ENCODE measurements at regions of chr6 and their contacts with region 1.

Region 1: GRCh38 chr6:166786704-166787293 is 159.7 kb upstream of the RPS6KA2 start:
- DNase-seq: no peak
- ATAC-seq: peak in 2 of 4 donors; percentile 63 to 66
- H3K4me3 ChIP-seq: no peak overlapping the region
- H3K27ac ChIP-seq: no peak overlapping the region
- H3K4me1 ChIP-seq: no peaks in the 10 kb centered on the region
- H3K27me3 ChIP-seq: no peaks in the 10 kb centered on the region
- CTCF ChIP-seq: peak; percentile 76

Region 2: DNA sequence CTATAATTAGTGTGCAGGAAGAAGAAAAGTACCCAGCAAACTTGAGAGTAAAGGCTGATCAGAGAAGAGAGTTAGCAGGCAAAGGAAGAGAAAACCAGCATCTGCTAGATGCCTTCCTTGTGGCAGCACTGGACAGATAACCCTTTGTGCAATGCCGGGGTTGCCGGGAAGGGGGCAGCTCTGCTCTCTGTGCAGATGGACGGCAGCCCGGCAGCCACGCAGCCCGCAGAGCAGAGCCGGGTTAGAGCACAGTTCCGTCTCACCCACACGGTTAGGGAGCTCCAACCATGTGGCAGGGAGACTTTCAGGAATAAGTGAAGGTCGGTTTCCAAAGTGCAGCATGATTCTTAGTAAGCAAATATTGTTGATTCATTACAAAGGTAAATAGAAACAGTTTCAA is 79.8 kb before region 1 on chr6:
- intact Hi-C with region 1: no loop called
- DNase-seq: peak; percentile 54 to 76
- ATAC-seq: peak; percentile 78 to 93 (median 88)
- H3K4me3 ChIP-seq: peak overlapping the region; percentile 30
- H3K27ac ChIP-seq: no peak overlapping the region
- H3K4me1 ChIP-seq: no peaks in the 10 kb centered on the region
- H3K27me3 ChIP-seq: no peaks in the 10 kb centered on the region
- CTCF ChIP-seq: peak; percentile 57

Region 3: DNA sequence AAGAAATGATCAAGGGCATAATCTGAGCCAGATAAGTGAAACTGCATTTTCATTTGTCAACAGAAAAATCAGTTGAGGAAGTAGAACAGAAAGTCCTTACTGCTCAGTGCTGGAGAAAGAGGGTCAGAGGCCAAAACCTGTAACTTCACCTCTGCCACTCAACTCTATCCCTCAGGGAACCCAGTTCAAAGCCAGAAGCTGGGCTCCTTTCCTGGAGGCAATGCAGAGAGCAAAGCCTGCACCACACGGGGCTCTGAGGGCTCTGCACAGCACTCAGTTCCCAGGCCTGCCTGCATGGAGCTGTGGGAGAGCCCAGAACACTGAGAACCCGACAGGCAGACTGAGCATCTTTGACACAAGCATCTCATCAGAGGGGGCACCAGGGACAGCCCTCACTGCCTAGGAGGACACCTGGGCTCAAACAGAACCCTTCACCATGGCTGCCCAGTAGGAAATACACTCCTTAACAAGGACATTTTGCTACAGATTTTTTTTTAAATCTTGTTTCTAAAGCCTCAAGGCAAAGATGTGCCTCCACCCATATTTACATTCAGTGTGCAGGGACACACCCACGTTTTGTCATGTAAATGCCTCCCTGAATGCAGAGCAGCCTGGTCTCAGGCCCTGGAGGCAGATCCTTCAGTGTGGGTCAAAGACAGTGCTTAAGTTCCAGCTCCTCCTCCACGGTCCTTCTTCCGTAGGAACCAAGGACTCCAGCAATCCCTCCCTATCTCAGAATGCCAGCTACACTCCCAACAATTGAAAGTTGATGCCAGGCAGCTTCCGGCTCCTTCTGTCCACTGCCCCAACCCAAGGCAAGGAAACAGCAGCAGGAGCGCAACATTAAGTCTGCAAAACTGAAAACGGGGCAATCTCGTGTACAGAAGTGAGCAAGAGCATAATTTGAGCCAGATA is 163.0 kb after region 1 on chr6:
- intact Hi-C with region 1: loop called (anchors 2 to 5 kb)
- DNase-seq: no peak
- ATAC-seq: peak in 1 of 4 donors; percentile 21
- H3K4me3 ChIP-seq: no peak overlapping the region
- H3K27ac ChIP-seq: peak overlapping the region; percentile 9
- H3K4me1 ChIP-seq: no peaks in the 10 kb centered on the region
- H3K27me3 ChIP-seq: no peaks in the 10 kb centered on the region
- CTCF ChIP-seq: no peak

Region 4: GRCh38 chr6:166989427-166990032 is 202.7 kb after region 1 on chr6:
- intact Hi-C with region 1: loop called in 1 of 2 experiments (anchors 5 kb)
- DNase-seq: no peak
- ATAC-seq: no peak
- H3K4me3 ChIP-seq: no peak overlapping the region
- H3K27ac ChIP-seq: no peak overlapping the region
- H3K4me1 ChIP-seq: no peaks in the 10 kb centered on the region
- H3K27me3 ChIP-seq: no peaks in the 10 kb centered on the region
- CTCF ChIP-seq: peak; percentile 31

Region 5: GRCh38 chr6:167146977-167147376 is 360.2 kb after region 1 on chr6:
- intact Hi-C with region 1: loop called in 1 of 2 experiments (anchors 5 kb)
- DNase-seq: no peak
- ATAC-seq: no peak
- H3K4me3 ChIP-seq: no peak overlapping the region
- H3K27ac ChIP-seq: no peak overlapping the region
- H3K4me1 ChIP-seq: no peaks in the 10 kb centered on the region
- H3K27me3 ChIP-seq: peaks cover 0 to 21% (median 5%) of the 10 kb centered on the region in 3 donors
- CTCF ChIP-seq: no peak